ENCODE measurements at regions of chr20 and their contacts with region 1.

Region 1: GRCh38 chr20:47468290-47469050 is 33.2 kb upstream of the NCOA3 start:
- DNase-seq: peak; percentile 47
- CTCF ChIP-seq: no peak

Region 2: DNA sequence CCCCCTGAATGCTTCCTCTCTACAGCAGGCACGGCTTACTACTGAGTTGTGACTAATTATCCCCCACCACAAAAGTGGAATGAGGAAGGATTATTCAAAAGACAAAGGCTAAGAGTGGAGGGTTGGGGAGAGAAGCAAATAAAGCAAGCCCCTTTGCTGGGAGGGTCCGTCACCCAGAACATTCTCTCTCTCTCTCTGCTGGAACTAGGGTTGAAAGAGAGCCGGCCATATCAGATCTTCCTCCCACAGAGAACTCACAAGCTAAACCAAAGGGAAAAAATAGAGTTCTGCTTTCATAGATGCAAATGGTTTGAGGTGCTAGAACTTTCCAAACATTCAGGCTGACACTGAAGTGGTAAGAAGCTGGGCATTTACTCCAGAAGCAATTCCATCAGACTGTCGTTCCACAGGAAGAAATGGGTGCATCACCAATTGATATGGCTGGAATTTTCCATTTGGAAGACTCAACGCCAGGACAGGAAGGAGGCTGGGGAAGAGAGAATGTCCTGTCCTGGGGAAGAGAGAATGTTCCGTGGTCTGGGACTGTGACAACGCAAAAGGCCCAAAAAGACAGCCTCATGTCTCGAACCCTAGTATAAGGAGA is 119.8 kb before region 1 on chr20:
- CTCF ChIA-PET with region 1: no interaction called
- POLR2A ChIA-PET with region 1: interaction called, 10 read pairs
- DNase-seq: no peak
- CTCF ChIP-seq: no peak

Measured in GM10248 (cell line).